Activated CD4-positive, alpha-beta memory T cell treated with anti-CD3 and anti-CD28 coated beads, Interleukin-2, amount 10 ng/mL, durations not matched to agents 7 days and 5 days (primary cell): ENCODE measurements at regions of chr1 and their contacts with region 1.

Region 1: DNA sequence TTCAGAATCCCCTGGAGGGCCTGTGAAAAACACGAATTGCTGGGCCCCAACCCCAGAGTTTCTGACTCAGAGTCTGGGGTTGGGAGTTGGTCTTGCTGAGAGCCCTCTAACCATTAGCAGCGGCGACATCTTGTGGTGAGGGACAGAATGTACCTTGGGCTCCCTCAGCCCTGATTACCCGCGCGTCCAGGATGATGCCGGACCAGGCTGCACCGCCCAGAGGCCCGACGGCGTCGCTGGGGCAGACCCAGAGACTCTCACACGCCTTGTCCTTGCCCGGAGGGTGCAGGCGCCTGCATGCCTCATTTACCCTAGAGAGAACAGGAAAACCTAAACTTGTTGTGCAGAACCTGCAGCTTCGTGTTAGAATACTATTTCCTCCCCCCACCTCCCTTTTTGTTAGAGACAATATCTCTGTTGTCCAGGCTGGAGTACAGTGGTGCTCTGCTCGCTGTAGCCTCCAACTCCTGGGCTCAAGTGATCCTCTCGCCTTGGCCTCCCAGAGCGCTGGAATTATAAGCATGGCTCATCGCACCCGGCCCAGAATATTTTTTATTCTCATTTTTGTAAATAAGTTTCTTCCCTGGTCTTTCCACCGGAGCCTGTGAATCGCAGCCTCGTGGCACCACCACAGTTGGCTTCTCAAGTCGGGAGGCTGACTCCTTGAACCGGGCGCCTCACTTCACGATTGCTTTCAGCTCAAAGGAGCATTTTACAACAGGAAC is 22.2 kb upstream of the RD3 start:
- DNase-seq: peak; percentile 79
- H3K4me3 Mint-ChIP-seq: peak overlapping the region; percentile 40
- H3K27ac Mint-ChIP-seq: no peak overlapping the region
- H3K4me1 Mint-ChIP-seq: peaks cover 42% of the 10 kb centered on the region
- H3K27me3 Mint-ChIP-seq: peaks cover 3% of the 10 kb centered on the region

Region 2: GRCh38 chr1:211323156-211324063 is 190.8 kb before region 1 on chr1:
- CTCF ChIA-PET with region 1: interaction called, 55 read pairs
- POLR2A ChIA-PET with region 1: interaction called, 7 read pairs
- DNase-seq: peak; percentile 77
- H3K4me3 Mint-ChIP-seq: no peak overlapping the region
- H3K27ac Mint-ChIP-seq: no peak overlapping the region
- H3K4me1 Mint-ChIP-seq: peaks cover 52% of the 10 kb centered on the region
- H3K27me3 Mint-ChIP-seq: no peaks in the 10 kb centered on the region

Region 3: GRCh38 chr1:211476200-211476849 is 37.9 kb before region 1 on chr1:
- CTCF ChIA-PET with region 1: interaction called, 33 read pairs
- POLR2A ChIA-PET with region 1: no interaction called
- DNase-seq: peak; percentile 82
- H3K4me3 Mint-ChIP-seq: no peak overlapping the region
- H3K27ac Mint-ChIP-seq: no peak overlapping the region
- H3K4me1 Mint-ChIP-seq: peaks cover 8% of the 10 kb centered on the region
- H3K27me3 Mint-ChIP-seq: peaks cover 11% of the 10 kb centered on the region

Region 4: DNA sequence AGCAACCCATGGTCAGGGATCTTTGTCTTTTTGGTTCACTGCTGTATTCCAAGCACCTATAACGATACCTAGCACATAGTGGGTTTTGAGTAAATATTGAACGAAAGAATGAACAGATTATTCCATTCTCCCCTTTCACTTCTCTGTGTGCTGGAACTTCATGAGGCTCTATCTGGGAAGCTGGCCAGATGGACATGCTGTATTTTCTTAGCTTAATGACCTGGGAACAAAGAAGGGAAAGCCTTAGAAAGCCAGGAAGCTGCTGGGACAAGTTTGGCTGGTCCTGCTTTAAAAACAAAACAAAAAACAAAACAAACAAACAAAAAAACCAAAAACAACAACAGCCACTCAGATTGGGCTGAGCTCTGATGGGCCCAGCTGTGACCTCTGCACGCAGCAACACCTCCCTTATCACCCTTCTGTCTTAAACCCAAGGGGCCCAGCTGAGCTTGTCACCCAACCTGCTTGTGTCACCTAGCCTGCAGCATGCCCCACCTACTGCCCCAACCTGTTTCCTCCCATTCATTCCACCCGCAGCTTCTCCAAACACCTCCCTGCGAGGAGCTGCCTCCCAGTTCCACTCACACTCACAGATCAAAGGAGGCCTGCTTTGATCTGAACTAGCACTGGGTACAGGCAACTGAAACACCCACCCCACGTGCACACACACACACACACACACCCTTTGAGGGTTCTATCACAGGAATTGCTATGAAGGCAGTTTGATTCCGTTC is 27.7 kb after region 1 on chr1:
- CTCF ChIA-PET with region 1: no interaction called
- POLR2A ChIA-PET with region 1: no interaction called
- DNase-seq: no peak
- H3K4me3 Mint-ChIP-seq: no peak overlapping the region
- H3K27ac Mint-ChIP-seq: no peak overlapping the region
- H3K4me1 Mint-ChIP-seq: no peaks in the 10 kb centered on the region
- H3K27me3 Mint-ChIP-seq: peaks cover 9% of the 10 kb centered on the region

Region 5: DNA sequence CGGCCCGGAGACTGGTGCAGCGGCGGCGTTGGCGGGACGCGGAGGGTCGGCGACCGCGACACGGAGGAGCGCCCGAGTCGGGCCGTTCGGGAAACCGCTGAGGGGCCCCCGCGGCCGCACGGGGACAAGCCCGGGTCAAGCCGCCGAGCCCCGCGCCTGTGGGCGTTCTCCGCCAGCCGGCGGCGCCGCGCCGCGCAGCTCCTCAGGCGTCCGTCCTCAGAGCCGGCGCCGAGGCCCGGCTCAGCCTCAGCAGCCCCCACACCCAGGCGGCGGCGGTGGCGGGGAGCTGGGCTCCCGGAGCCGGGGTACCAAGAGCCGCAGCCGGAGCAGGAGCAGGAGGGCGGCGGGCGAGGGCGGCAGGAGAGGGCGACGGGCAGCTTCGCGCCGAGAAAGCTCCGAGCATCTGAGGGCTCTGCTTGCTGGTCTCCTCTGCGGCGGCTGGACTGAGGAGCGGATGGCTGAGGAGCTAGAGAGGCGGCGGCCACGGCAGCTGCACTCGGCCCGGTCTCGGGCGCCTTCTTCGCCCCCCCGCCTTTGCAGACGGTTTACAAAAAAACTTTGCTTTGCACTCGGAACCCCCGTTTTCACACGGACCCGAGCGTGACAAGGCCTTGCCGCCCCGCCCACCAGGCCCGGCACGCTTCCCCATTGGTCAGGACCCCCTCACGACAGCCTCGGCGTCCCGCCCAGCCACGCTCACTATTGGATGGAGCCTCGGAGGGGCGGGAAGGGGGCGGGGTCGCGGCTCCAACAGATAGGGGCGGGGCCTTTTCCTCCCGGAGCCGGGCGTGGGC is 64.6 kb after region 1 on chr1 and contains the start of gene SLC30A1:
- CTCF ChIA-PET with region 1: interaction called, 15 read pairs
- POLR2A ChIA-PET with region 1: interaction called, 3 read pairs
- DNase-seq: peak; percentile 100
- H3K4me3 Mint-ChIP-seq: peak within 1 kb of the TSS; percentile 90
- H3K27ac Mint-ChIP-seq: peak within 1 kb of the TSS; percentile 80
- H3K4me1 Mint-ChIP-seq: peaks cover 57% of the 10 kb centered on the region
- H3K27me3 Mint-ChIP-seq: peaks cover 5% of the 10 kb centered on the region
- total RNA-seq, gene SLC30A1: 8.0 to 8.2 TPM

Region 6: GRCh38 chr1:211654838-211655787 is 140.9 kb after region 1 on chr1:
- CTCF ChIA-PET with region 1: interaction called, 35 read pairs
- POLR2A ChIA-PET with region 1: no interaction called
- DNase-seq: peak; percentile 83
- H3K4me3 Mint-ChIP-seq: no peak overlapping the region
- H3K27ac Mint-ChIP-seq: no peak overlapping the region
- H3K4me1 Mint-ChIP-seq: peaks cover 5% of the 10 kb centered on the region
- H3K27me3 Mint-ChIP-seq: no peaks in the 10 kb centered on the region

Region 7: DNA sequence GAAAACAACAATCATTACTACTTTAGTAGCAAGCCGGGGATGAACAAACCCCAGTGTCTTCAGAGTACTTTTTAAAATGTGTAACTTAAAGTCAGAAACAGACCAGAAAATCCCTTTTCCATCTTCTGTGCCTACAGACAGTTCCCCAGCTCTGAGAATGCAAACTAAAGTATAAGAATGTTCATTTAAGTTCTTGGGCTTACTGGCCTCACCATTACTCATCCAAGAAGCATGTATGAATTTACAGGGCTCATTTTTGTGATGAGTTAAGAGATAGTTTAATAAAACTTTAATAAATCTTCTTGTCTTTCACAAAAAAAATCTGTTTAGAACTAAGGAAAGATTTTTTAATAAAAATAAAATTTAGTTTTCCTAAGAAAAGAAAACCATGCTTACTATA is 311.8 kb after region 1 on chr1:
- CTCF ChIA-PET with region 1: no interaction called
- POLR2A ChIA-PET with region 1: no interaction called
- DNase-seq: no peak
- H3K4me3 Mint-ChIP-seq: no peak overlapping the region
- H3K27ac Mint-ChIP-seq: no peak overlapping the region
- H3K4me1 Mint-ChIP-seq: peaks cover 29% of the 10 kb centered on the region
- H3K27me3 Mint-ChIP-seq: no peaks in the 10 kb centered on the region

Region 8: DNA sequence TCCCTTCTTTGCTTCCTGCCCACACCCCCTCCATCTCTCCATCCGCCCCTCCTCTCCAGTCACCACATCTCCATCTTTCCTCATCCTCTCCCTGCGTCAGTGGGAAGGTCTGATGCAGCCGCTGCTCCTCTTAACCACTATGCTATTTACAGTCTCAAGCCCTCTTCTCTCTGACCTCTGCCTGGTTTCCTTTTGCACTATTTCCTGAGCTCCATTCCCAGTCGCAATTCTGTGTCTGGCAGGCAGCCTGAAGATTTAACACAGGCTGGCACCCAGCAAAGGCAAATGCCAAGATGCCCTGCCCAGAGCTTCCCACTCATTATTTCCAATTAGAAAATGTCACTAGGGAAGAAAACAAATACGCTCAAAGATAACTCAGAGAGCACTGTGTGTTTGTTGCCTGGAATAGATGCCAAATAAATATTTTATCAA is 406.0 kb after region 1 on chr1:
- CTCF ChIA-PET with region 1: no interaction called
- POLR2A ChIA-PET with region 1: no interaction called
- DNase-seq: no peak
- H3K4me3 Mint-ChIP-seq: no peak overlapping the region
- H3K27ac Mint-ChIP-seq: no peak overlapping the region
- H3K4me1 Mint-ChIP-seq: no peaks in the 10 kb centered on the region
- H3K27me3 Mint-ChIP-seq: peaks cover 21% of the 10 kb centered on the region